Activated CD4-positive, alpha-beta T cell treated with anti-CD3 and anti-CD28 coated beads, Interleukin-2, amount 10 ng/mL, durations not matched to agents 24 days and 14 days (primary cell): ENCODE measurements at regions of chr17 and their contacts with region 1.

Region 1: GRCh38 chr17:78186692-78187595 is at the starts of genes AFMID and TK1:
- DNase-seq: peak; percentile 97
- H3K4me3 Mint-ChIP-seq: peak within 1 kb of the TSS; percentile 86
- H3K27ac Mint-ChIP-seq: peak within 1 kb of the TSS; percentile 76
- H3K4me1 Mint-ChIP-seq: peaks cover 32% of the 10 kb centered on the region
- H3K27me3 Mint-ChIP-seq: no peaks in the 10 kb centered on the region
- total RNA-seq, gene AFMID: 31.0 and 33.4 TPM in 2 replicates
- total RNA-seq, gene TK1: 66.7 and 69.0 TPM in 2 replicates

Region 2: DNA sequence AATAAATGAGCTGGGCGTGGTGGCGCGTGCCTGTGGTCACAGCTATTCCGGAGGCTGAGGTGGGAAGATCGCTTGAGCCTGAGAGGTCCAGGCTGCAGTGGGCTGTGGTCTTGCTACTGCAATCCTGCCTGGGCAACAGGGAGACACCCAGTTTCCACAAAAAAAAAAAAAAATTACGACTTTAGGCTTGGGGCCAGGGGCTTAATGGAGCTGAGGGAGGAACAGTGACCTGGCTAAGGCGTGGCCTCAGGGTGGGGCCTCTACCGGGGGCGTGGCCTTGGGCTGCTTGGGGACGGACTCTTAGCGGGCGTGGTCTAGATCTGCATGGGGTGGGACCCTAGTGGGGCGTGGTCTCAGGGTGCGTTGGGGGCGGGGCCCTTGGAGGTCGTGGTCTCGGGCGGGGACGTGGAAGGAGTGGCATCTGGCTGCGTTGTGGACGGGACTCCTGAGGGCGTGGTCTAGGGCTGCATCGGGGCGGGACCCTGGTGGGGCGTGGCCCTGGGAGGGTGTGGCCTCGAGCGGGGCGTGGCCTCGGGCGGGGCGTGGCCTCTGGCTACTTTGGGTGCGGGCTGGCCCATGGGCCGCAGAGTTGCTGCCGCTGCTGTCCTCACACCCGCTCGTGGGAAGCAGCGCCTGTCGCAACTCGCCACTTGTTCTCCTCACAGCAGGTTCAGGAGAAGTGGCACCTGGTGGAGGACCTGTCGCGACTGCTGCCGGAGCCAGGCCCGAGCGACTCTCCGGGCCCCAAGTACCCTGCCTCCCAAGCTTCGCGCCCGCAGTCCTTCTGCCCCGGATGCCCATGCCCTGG is 46.6 kb before region 1 on chr17:
- intact Hi-C with region 1: loop called (anchors 1 kb)
- DNase-seq: peak; percentile 99
- H3K4me3 Mint-ChIP-seq: peak overlapping the region; percentile 31
- H3K27ac Mint-ChIP-seq: peak overlapping the region; percentile 76
- H3K4me1 Mint-ChIP-seq: peaks cover 49% of the 10 kb centered on the region
- H3K27me3 Mint-ChIP-seq: no peaks in the 10 kb centered on the region

Region 3: DNA sequence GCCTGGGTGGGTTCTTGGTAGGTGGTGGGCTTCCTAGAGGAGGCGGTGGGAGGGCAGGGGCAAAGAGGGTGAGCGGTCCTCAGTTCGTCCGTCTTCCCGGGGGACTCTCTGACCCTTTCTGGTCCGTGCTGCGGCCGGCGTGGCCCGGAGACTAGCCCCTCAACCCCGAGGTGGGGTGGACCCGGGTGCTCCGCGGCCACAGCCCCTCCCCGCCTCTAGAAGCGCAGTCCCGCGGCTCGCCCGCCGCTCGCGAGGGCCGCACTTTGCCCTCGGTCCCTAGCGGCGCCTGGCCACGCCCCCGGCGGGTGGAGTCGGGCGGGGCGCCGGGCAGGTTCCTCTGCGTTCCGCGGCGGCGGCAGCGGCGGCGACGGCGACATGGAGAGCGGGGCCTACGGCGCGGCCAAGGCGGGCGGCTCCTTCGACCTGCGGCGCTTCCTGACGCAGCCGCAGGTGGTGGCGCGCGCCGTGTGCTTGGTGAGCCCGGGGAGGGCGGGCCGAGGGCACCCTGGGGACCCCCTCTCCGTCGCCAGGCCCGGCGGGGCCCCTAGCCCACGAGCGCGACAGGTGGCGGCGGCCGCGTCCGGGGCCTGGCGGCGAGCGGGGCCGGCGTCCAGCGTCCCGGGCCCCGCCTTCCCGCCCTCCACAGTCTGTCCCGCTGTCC is 18.6 kb before region 1 on chr17 and contains the start of gene SYNGR2:
- intact Hi-C with region 1: loop called (anchors 1 kb)
- DNase-seq: peak; percentile 98
- H3K4me3 Mint-ChIP-seq: peak within 1 kb of the TSS; percentile 81
- H3K27ac Mint-ChIP-seq: peak within 1 kb of the TSS; percentile 78
- H3K4me1 Mint-ChIP-seq: peaks cover 30% of the 10 kb centered on the region
- H3K27me3 Mint-ChIP-seq: no peaks in the 10 kb centered on the region
- total RNA-seq, gene SYNGR2: 123 and 125 TPM in 2 replicates

Region 4: GRCh38 chr17:78214706-78215061 is 27.7 kb after region 1 on chr17:
- intact Hi-C with region 1: loop called (anchors 1 kb)
- DNase-seq: no peak
- H3K4me3 Mint-ChIP-seq: peak overlapping the region; percentile 94
- H3K27ac Mint-ChIP-seq: peak overlapping the region; percentile 90
- H3K4me1 Mint-ChIP-seq: peaks cover 12% of the 10 kb centered on the region
- H3K27me3 Mint-ChIP-seq: no peaks in the 10 kb centered on the region